ENCODE measurements at regions of chr1 and their contacts with region 1.

Region 1: GRCh38 chr1:57079454-57080157 is 113.8 kb upstream of the C8B start:
- DNase-seq: no peak
- ATAC-seq: no peak

Region 2: DNA sequence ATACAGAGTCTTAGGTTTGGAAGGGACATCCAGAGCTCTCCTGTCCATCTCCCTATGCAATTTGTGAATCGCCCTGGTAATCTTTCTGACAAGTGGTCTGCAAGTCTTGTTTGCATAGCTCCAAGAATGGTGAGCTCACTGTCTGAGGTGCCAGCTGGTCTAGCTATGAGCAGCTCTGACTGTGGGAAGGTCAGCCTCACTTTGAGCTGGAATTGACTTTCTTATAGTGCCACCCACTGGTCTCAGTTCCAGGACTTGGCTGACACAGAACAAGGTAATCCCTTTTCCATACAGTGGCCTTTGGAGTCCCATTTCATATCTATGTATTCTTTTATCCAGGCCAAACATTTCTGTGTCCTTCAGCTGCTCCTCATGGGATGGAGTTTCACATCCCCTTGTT is 18.2 kb before region 1 on chr1:
- intact Hi-C with region 1: no loop called
- DNase-seq: no peak
- ATAC-seq: no peak

Region 3: DNA sequence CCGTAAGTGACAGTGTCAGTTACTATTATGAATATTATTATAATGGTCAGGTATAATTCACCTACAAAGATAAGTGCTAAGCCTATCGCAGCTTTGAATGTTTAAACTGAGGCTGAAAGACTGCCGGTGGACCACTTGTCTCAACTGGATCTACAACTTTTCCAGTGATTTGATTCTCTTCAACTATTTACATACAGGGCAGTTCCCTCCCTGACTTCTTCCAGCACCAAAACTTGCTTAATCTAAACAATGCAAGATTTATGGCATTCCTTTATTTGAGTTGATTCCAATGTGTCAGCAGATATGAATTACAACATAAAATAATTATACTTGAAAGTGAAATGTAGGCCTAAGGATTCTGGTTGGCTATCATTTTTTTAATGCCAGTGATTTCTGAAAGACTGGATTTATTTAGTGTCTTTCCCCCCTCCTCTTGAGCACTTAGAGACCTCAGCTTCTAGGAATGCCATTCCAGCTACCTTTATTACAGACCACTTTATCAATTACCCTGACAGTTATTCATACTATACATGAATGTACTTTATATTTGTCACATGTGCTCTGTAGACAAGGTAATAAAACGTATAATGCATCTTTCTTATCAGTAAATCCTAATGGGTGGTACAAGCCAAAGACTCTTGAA is 39.5 kb after region 1 on chr1:
- intact Hi-C with region 1: loop called (anchors 5 kb)
- DNase-seq: no peak
- ATAC-seq: no peak

Measured in Right ventricle myocardium inferior (tissue), 1 donor.